IMR-90 (cell line): ENCODE measurements at regions of chr2 and their contacts with region 1.

Region 1: DNA sequence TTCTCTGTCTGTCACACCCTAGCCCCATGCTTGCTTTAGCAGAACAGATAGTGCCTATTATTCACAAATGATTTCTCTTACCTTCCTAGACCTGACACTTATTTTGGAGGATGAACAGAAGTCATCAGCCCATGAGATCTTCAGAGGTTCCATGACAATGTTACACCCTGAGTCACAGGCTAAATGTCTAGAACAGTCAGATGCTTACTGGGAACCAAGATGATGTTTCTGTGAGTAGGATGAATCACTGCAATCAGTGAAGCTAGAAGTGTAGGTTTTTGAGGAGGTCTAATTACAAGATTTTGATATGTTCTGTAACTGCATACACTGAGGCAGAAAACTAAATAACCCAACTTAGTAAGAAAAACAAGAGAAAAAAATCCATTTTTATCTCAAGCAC is 123.0 kb upstream of the THUMPD2 start:
- DNase-seq: peak; percentile 85
- ATAC-seq: peak; percentile 91
- H3K4me3 ChIP-seq: no peak overlapping the region
- H3K27ac ChIP-seq: no peak overlapping the region
- H3K4me1 ChIP-seq: no peaks in the 10 kb centered on the region
- H3K27me3 ChIP-seq: no peaks in the 10 kb centered on the region; the same call in 1 of the 2 replicates
- CTCF ChIP-seq: no peak
- POLR2A ChIP-seq: no peak
- RAD21 ChIP-seq: no peak

Region 2: GRCh38 chr2:39920307-39920801 is 18.3 kb after region 1 on chr2:
- CTCF ChIA-PET with region 1: no interaction called
- POLR2A ChIA-PET with region 1: no interaction called
- dilution Hi-C with region 1: no loop called
- in situ Hi-C with region 1: no loop called
- intact Hi-C with region 1: no loop called
- DNase-seq: no peak
- ATAC-seq: no peak
- H3K4me3 ChIP-seq: no peak overlapping the region
- H3K27ac ChIP-seq: no peak overlapping the region; the same call in 1 of the 2 replicates
- H3K4me1 ChIP-seq: peaks cover 12% of the 10 kb centered on the region
- H3K27me3 ChIP-seq: no peaks in the 10 kb centered on the region
- CTCF ChIP-seq: no peak
- POLR2A ChIP-seq: no peak
- RAD21 ChIP-seq: no peak

Region 3: GRCh38 chr2:41782306-41783158 is 1880.4 kb after region 1 on chr2:
- CTCF ChIA-PET with region 1: no interaction called
- POLR2A ChIA-PET with region 1: no interaction called
- dilution Hi-C with region 1: no loop called
- in situ Hi-C with region 1: loop called (anchors 10 kb)
- intact Hi-C with region 1: no loop called
- DNase-seq: peak; percentile 30
- ATAC-seq: peak; percentile 74
- H3K4me3 ChIP-seq: no peak overlapping the region
- H3K27ac ChIP-seq: no peak overlapping the region
- H3K4me1 ChIP-seq: no peaks in the 10 kb centered on the region
- H3K27me3 ChIP-seq: peaks cover 6% of the 10 kb centered on the region
- CTCF ChIP-seq: peak; percentile 73
- POLR2A ChIP-seq: no peak
- RAD21 ChIP-seq: peak; percentile 84